MCF 10A (cell line): ENCODE measurements at regions of chr7 and their contacts with region 1.

Region 1: DNA sequence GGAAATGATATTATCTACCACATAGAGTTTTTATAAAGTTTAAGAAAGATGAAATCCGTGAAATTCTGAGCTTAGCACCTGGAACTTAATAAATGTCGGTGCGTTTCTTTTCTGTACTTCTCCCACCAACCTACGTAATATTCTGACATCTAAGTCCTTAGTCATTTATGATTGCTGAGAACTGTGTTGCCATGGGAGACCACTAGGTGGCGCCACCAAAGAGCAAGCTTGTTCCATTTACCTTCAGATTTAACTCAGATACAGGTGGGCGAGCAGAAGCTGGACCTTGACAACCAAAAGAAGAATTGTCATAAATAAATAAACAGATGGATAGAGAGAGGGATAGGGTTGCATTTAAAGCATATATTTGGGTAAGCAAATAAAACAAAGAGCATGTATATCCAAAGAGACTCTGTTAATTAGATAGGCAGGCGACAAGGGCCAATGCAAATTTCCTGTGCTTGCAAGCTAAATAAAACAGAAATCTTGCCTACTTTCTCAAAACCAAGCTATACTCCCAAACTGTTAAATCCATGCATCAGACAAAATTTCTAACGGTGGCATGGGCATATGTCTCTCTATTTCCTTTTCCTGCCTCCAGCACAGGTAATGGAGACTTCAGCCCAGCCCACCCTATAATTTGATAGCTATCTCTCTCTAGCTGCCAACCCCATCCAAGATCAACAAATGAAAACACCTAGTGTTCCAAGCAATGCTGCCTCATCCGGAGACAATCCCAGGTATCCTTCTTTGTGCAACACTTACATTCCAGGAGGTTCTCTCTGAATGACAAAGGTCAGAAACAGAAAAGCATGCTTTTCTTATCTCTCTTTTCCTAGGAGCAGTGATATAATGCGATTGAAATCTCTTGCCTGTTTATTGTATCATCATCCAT is 699.6 kb downstream of the INHBA start:
- DNase-seq: peak; percentile 64
- H3K4me3 Mint-ChIP-seq: no peak overlapping the region
- H3K27ac Mint-ChIP-seq: peak overlapping the region; percentile 25
- H3K4me1 Mint-ChIP-seq: peaks cover 42% of the 10 kb centered on the region
- H3K27me3 Mint-ChIP-seq: no peaks in the 10 kb centered on the region
- CTCF ChIP-seq: peak; percentile 73

Region 2: GRCh38 chr7:40833888-40834234 is 169.4 kb before region 1 on chr7:
- CTCF ChIA-PET with region 1: interaction called, 4 read pairs
- POLR2A ChIA-PET with region 1: interaction called, 3 read pairs
- intact Hi-C with region 1: loop called (anchors 10 kb)
- DNase-seq: no peak
- H3K4me3 Mint-ChIP-seq: no peak overlapping the region
- H3K27ac Mint-ChIP-seq: no peak overlapping the region
- H3K4me1 Mint-ChIP-seq: peaks cover 17% of the 10 kb centered on the region
- H3K27me3 Mint-ChIP-seq: no peaks in the 10 kb centered on the region
- CTCF ChIP-seq: peak; percentile 31

Region 3: GRCh38 chr7:41107668-41108448 is 104.6 kb after region 1 on chr7:
- CTCF ChIA-PET with region 1: interaction called, 5 read pairs
- POLR2A ChIA-PET with region 1: interaction called, 3 read pairs
- intact Hi-C with region 1: loop called (anchors 5 kb)
- DNase-seq: peak; percentile 93
- H3K4me3 Mint-ChIP-seq: peak overlapping the region; percentile 48
- H3K27ac Mint-ChIP-seq: peak overlapping the region; percentile 52
- H3K4me1 Mint-ChIP-seq: peaks cover 45% of the 10 kb centered on the region
- H3K27me3 Mint-ChIP-seq: no peaks in the 10 kb centered on the region
- CTCF ChIP-seq: no peak